PC-9 (cell line): ENCODE measurements at regions of chr6 and their contacts with region 1.

Region 1: DNA sequence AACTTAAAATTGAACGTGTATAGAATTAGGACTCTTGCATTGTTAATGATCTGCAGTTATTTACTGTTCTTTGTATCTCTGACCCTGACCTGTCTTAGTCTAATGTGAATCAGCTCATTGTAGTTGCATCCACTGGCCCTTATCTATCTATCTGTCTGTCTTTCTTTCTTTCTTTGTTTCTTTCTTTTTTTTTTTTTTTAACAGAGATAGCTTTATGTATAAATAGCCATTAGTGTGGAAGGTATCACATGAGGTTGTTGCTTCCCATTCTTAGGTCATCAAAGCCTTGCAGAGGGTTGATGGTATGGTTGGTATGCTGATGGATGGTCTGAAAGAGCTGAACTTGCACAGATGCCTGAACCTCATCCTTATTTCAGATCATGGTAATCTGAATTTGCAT is 59.9 kb downstream of the ENPP1 start:
- DNase-seq: no peak
- H3K4me3 ChIP-seq: no peak overlapping the region
- H3K27ac ChIP-seq: no peak overlapping the region
- H3K4me1 ChIP-seq: peaks cover 19% of the 10 kb centered on the region
- H3K27me3 ChIP-seq: no peaks in the 10 kb centered on the region
- CTCF ChIP-seq: no peak

Region 2: DNA sequence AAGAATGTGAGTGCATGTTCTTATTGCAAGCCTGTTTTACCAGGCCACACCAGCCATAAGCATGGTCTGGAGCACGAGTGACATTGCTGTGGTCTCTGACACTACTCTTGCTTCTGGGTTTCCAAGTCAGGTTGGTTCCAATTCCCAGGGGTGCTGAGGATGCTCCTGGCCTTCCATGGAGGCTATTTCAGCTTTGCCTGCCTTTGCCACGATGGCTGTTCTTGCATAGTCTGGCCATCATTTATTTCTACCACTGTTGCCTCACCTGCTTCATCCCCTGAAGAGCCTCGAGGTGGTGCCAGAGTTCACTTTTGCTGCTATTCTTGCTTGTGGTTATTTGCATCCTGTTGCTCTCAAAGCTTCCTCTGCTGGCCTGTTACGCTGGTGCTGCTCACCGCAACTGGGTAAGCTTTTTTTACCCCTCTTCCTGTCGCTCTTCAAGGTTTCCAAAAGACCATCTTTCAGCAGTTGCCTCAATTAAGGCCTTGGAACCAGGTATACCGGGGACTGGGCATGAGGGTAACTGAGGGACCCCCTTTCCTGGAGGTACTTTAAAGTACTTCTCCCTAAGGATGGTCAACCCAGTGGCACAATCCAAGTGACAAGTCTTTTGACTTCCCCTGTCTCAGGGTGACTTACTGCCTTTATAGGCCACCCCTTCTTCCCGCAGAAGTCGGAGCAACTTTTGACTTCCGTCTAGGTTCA is 668.0 kb before region 1 on chr6:
- CTCF ChIA-PET with region 1: interaction called, 12 read pairs
- POLR2A ChIA-PET with region 1: no interaction called
- intact Hi-C with region 1: no loop called
- DNase-seq: peak in 1 of 2 experiments; percentile 5
- H3K4me3 ChIP-seq: no peak overlapping the region
- H3K27ac ChIP-seq: no peak overlapping the region
- H3K4me1 ChIP-seq: no peaks in the 10 kb centered on the region
- H3K27me3 ChIP-seq: no peaks in the 10 kb centered on the region
- CTCF ChIP-seq: peak; percentile 74

Region 3: GRCh38 chr6:131615275-131615674 is 252.5 kb before region 1 on chr6:
- CTCF ChIA-PET with region 1: no interaction called
- POLR2A ChIA-PET with region 1: no interaction called
- intact Hi-C with region 1: no loop called
- DNase-seq: no peak
- H3K4me3 ChIP-seq: no peak overlapping the region
- H3K27ac ChIP-seq: no peak overlapping the region
- H3K4me1 ChIP-seq: no peaks in the 10 kb centered on the region
- H3K27me3 ChIP-seq: no peaks in the 10 kb centered on the region
- CTCF ChIP-seq: no peak

Region 4: DNA sequence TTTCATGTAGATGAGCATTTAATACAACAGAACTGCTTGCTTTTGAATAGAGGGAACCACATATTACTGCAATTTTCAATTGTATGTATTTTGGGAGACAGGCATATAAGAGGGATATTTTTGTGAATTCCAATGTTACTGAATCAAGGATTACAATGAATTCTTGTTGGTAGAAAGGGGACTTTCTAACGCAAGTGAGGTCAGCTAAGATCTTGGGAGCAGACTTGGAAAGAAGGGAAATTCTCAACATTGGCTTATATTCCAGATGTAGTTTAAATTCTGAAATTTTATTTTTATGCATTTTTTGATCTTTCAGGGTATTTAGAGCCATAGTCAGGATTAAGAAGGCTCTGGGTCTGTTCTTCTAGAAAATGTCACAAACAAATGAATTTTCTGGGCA is 113.7 kb before region 1 on chr6:
- CTCF ChIA-PET with region 1: no interaction called
- POLR2A ChIA-PET with region 1: no interaction called
- intact Hi-C with region 1: no loop called
- DNase-seq: peak in 1 of 2 experiments; percentile 20
- H3K4me3 ChIP-seq: no peak overlapping the region
- H3K27ac ChIP-seq: no peak overlapping the region
- H3K4me1 ChIP-seq: no peaks in the 10 kb centered on the region
- H3K27me3 ChIP-seq: no peaks in the 10 kb centered on the region
- CTCF ChIP-seq: no peak

Region 5: GRCh38 chr6:132698608-132699007 is 830.9 kb after region 1 on chr6:
- CTCF ChIA-PET with region 1: no interaction called
- POLR2A ChIA-PET with region 1: interaction called, 15 read pairs
- intact Hi-C with region 1: no loop called
- DNase-seq: no peak
- H3K4me3 ChIP-seq: no peak overlapping the region
- H3K27ac ChIP-seq: no peak overlapping the region
- H3K4me1 ChIP-seq: no peaks in the 10 kb centered on the region
- H3K27me3 ChIP-seq: no peaks in the 10 kb centered on the region
- CTCF ChIP-seq: no peak